H1 (cell line): ENCODE measurements at regions of chr6 and their contacts with region 1.

Region 1: GRCh38 chr6:2791124-2791974 is 26.2 kb downstream of the WRNIP1 start:
- DNase-seq: no peak
- H3K4me3 ChIP-seq: no peak overlapping the region
- H3K27ac ChIP-seq: no peak overlapping the region
- H3K4me1 ChIP-seq: no peaks in the 10 kb centered on the region; a peak in 1 of 7 replicates
- H3K27me3 ChIP-seq: no peaks in the 10 kb centered on the region
- CTCF ChIP-seq: peak; percentile 64 to 89 (median 88)
- EP300 ChIP-seq: no peak
- POLR2A ChIP-seq: no peak
- RAD21 ChIP-seq: peak; percentile 90 to 95

Region 2: GRCh38 chr6:2658788-2659187 is 132.6 kb before region 1 on chr6:
- CTCF ChIA-PET with region 1: no interaction called
- POLR2A ChIA-PET with region 1: no interaction called
- DNase-seq: no peak
- H3K4me3 ChIP-seq: no peak overlapping the region
- H3K27ac ChIP-seq: no peak overlapping the region
- H3K4me1 ChIP-seq: peaks cover 0 to 5% (median 1%) of the 10 kb centered on the region in 4 experiments; a peak in 3 of 7 replicates
- H3K27me3 ChIP-seq: peaks cover 0 to 2% (median 0%) of the 10 kb centered on the region in 4 experiments; a peak in 1 of 7 replicates
- CTCF ChIP-seq: no peak
- EP300 ChIP-seq: no peak
- POLR2A ChIP-seq: no peak
- RAD21 ChIP-seq: no peak

Region 3: DNA sequence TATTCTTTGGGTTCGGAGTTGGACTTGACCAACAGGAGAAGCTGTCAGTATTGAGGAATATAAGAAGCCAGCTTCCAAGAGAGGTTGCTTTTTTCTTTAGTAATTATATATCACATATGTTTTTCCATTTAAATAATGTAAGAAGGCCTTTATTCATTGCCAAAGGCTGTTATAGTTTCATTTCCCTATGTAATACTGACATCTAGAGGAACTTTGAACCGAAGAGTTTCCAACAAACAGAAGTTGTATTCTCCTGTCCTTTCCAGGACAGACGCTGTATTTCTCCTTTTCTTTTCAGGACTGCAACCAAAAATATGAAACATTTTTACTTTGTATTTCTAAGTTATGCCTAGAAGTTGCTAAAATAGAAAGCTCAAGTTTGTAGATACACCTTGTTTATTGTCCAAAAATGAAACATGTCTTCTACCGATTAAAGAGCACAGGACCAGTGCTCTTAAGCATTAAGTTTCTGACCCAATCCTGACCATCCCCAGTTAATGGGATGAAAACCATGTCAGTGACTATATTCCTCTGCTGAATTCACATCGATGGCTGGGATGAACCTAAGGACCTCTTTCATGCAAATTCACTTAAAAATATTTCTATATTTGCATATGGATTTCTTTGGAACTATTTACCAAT is 95.8 kb before region 1 on chr6:
- CTCF ChIA-PET with region 1: no interaction called
- POLR2A ChIA-PET with region 1: no interaction called
- DNase-seq: no peak
- H3K4me3 ChIP-seq: no peak overlapping the region
- H3K27ac ChIP-seq: no peak overlapping the region
- H3K4me1 ChIP-seq: no peaks in the 10 kb centered on the region
- H3K27me3 ChIP-seq: no peaks in the 10 kb centered on the region; a peak in 1 of 7 replicates
- CTCF ChIP-seq: peak in 2 of 3 experiments; percentile 35 to 43; a peak in 2 of 4 replicates
- EP300 ChIP-seq: no peak
- POLR2A ChIP-seq: no peak
- RAD21 ChIP-seq: peak; percentile 64 to 74

Region 4: GRCh38 chr6:2773450-2773849 is 17.9 kb before region 1 on chr6:
- CTCF ChIA-PET with region 1: interaction called, 11 read pairs
- POLR2A ChIA-PET with region 1: interaction called, 4 read pairs
- DNase-seq: no peak
- H3K4me3 ChIP-seq: no peak overlapping the region
- H3K27ac ChIP-seq: no peak overlapping the region
- H3K4me1 ChIP-seq: peaks cover 0 to 7% (median 3%) of the 10 kb centered on the region in 4 experiments; a peak in 3 of 7 replicates
- H3K27me3 ChIP-seq: no peaks in the 10 kb centered on the region
- CTCF ChIP-seq: no peak
- EP300 ChIP-seq: no peak
- POLR2A ChIP-seq: no peak
- RAD21 ChIP-seq: no peak

Region 5: GRCh38 chr6:2827142-2827541 is 35.8 kb after region 1 on chr6:
- CTCF ChIA-PET with region 1: interaction called, 10 read pairs
- POLR2A ChIA-PET with region 1: interaction called, 3 read pairs
- DNase-seq: no peak
- H3K4me3 ChIP-seq: no peak overlapping the region
- H3K27ac ChIP-seq: no peak overlapping the region
- H3K4me1 ChIP-seq: no peaks in the 10 kb centered on the region
- H3K27me3 ChIP-seq: no peaks in the 10 kb centered on the region
- CTCF ChIP-seq: no peak
- EP300 ChIP-seq: no peak
- POLR2A ChIP-seq: no peak
- RAD21 ChIP-seq: no peak

Region 6: DNA sequence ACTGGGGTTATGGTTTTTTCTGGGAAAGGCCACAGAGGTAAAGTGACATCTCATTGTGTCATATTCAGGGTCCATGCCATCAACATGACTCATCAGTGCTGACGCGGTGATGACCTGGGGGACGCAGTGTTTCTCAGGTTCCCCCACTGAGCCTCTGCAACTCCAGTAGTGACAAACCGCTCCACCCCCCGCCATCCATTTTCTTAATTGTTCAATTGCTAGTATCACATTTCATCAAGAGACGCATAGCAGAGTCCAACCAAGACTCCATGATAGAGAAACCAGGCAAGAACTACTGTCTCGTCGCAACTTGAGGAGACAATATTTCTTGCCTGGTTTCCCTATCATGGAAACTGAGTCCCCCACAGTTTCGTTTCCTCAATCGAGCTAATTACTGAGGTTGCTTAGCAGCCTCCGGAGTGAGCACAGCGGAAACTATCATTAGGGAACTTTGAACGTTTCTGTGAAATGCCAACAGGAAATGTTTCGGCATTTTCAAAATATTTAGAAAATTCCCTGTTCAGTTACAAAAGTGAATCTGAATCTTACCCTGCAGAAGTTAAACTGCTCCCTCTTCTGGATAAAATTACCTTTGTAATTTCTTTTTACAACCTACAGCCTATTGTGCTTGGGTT is 62.5 kb after region 1 on chr6:
- CTCF ChIA-PET with region 1: interaction called, 13 read pairs
- POLR2A ChIA-PET with region 1: interaction called, 3 read pairs
- DNase-seq: no peak
- H3K4me3 ChIP-seq: peak overlapping the region in 2 of 4 experiments; percentile 4 to 30; a peak in 3 of 8 replicates
- H3K27ac ChIP-seq: 0 out of 2 replicates have a peak overlapping the region, but pooled peaks have one; percentile 13
- H3K4me1 ChIP-seq: peaks cover 3 to 20% (median 9%) of the 10 kb centered on the region in 4 experiments
- H3K27me3 ChIP-seq: no peaks in the 10 kb centered on the region
- CTCF ChIP-seq: no peak
- EP300 ChIP-seq: no peak
- POLR2A ChIP-seq: no peak
- RAD21 ChIP-seq: no peak

Region 7: GRCh38 chr6:2900821-2901644 is 109.7 kb after region 1 on chr6:
- CTCF ChIA-PET with region 1: interaction called, 11 read pairs
- POLR2A ChIA-PET with region 1: no interaction called
- DNase-seq: no peak
- H3K4me3 ChIP-seq: peak overlapping the region; percentile 1 to 80 (median 41); a peak in 5 of 8 replicates
- H3K27ac ChIP-seq: no peak overlapping the region
- H3K4me1 ChIP-seq: peaks cover 3 to 23% (median 4%) of the 10 kb centered on the region in 4 experiments; a peak in 6 of 7 replicates
- H3K27me3 ChIP-seq: peaks cover 0 to 2% (median 0%) of the 10 kb centered on the region in 4 experiments; a peak in 2 of 7 replicates
- CTCF ChIP-seq: no peak
- EP300 ChIP-seq: no peak
- POLR2A ChIP-seq: no peak
- RAD21 ChIP-seq: no peak

Region 8: DNA sequence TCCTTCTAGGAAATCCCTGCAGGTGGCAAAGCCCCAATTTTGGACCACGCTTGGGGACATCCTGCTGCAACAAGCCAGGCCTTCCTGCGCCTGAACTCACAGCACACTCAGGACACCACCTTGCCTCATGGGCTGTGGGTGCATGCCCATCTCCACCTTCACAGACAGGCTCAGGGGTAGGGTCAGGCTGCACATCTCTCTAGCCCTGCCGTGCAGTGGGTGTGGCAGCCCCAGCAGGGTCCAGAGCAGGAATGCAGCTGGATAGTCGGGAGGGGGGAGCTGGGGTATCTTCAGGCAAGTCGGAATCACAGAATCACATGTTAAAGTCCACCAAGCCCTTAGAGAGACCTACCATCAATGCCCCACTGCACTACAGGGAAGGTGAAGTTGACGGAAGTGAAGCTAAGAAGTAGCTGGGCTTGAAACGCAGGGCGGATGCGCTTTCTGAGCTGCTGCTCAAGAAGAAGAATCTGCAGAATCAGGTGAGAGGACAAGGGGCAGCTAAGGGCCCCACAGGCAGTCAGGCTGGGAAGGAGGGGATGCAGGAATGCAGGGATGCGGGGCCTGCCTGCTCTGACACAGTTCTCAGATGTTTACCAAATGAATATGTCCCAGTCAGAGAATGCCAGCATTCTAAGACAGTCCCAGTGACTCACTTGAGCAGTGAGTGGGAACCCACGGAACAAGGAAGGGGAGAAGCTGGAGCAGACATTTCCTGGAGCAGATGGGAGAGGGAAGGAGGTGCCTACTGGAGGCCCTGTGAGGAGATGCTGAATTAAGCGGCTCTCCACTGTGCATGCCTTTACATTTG is 168.8 kb after region 1 on chr6:
- CTCF ChIA-PET with region 1: no interaction called
- POLR2A ChIA-PET with region 1: no interaction called
- DNase-seq: no peak
- H3K4me3 ChIP-seq: peak overlapping the region in 1 of 4 experiments; percentile 0; a peak in 1 of 8 replicates
- H3K27ac ChIP-seq: no peak overlapping the region
- H3K4me1 ChIP-seq: peaks cover 16 to 23% (median 18%) of the 10 kb centered on the region in 4 experiments
- H3K27me3 ChIP-seq: no peaks in the 10 kb centered on the region
- CTCF ChIP-seq: no peak
- EP300 ChIP-seq: no peak
- POLR2A ChIP-seq: no peak
- RAD21 ChIP-seq: no peak

Region 9: DNA sequence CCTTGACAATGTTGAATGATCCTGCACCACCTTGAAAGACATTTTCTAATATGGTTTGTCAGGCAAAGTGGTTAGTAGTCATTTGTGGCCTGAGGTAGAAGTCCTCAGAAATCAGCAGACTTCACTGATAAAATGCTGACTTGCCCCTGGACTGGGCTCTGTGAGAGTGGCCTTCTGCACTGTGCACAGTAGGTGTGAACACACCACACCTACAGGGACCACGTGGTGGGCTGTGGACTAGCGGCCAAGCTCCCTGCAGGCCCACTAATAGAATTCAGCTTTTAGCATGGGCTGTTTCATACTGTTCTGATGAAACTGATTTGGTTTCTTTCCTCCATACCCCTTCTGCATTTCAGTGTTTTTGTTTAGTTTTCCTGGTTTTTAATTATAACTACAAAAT is 334.5 kb after region 1 on chr6:
- CTCF ChIA-PET with region 1: no interaction called
- POLR2A ChIA-PET with region 1: no interaction called
- DNase-seq: no peak
- H3K4me3 ChIP-seq: no peak overlapping the region
- H3K27ac ChIP-seq: no peak overlapping the region
- H3K4me1 ChIP-seq: no peaks in the 10 kb centered on the region; a peak in 2 of 7 replicates
- H3K27me3 ChIP-seq: no peaks in the 10 kb centered on the region; a peak in 1 of 7 replicates
- CTCF ChIP-seq: no peak
- EP300 ChIP-seq: no peak
- POLR2A ChIP-seq: no peak
- RAD21 ChIP-seq: no peak